ENCODE measurements at regions of chr3 and their contacts with region 1.

Region 1: DNA sequence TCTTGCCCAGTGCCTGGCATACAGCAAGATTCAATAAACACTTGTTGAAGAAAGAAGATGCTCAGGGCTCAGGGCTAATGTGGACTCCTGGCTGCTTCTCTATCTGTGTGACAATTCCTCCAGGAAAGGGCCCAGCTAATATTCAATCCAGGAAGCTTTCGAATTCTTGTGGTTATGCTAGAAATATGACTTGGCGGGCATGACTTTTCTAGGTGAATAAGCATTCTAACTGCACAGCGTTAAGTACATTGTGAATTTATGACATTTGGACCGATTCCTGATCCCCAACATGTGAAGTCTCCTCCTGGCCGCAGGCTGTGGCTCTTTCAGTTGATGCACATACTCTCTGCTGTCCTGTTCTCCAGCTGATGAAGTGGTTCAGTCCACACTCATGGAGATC is 117.0 kb downstream of the IMPG2 start:
- DNase-seq: no peak
- H3K4me3 ChIP-seq: no peak overlapping the region
- H3K27ac ChIP-seq: no peak overlapping the region
- H3K4me1 ChIP-seq: no peaks in the 10 kb centered on the region
- H3K27me3 ChIP-seq: no peaks in the 10 kb centered on the region
- CTCF ChIP-seq: no peak
- POLR2A ChIP-seq: no peak

Region 2: DNA sequence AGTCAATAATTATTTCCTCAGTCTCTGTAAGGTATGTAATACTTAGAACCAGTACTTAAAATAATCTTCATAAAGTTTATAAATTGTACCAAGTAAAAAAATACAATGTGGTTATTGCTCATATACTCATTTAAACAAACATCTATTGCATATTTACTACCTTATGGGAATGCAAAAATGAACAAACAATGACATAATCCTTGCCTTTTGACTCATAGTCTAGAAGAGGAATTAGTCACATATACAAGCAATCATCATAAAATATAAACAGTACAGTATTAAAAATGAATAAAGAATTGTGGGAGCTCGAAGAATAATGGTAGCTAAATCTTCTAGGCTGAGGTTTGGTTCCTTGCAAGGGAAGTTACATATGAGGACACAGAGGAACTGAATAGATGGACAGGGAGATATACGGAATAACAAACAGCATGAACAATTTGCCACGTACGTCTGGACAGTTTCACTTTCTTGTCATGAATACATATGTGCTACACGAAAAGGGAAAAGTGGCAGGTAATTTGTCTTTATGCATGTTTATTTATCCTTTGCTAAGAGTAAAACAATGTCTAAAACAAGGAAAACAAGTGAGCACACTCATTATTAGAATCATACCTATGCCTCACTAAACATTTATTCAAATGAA is 99.8 kb after region 1 on chr3:
- intact Hi-C with region 1: loop called (anchors 10 kb)
- DNase-seq: no peak
- H3K4me3 ChIP-seq: no peak overlapping the region
- H3K27ac ChIP-seq: no peak overlapping the region
- H3K4me1 ChIP-seq: no peaks in the 10 kb centered on the region
- H3K27me3 ChIP-seq: no peaks in the 10 kb centered on the region
- CTCF ChIP-seq: no peak
- POLR2A ChIP-seq: no peak

Measured in prostate gland (tissue), 2 donors.